SK-N-SH (cell line): ENCODE measurements at regions of chr11 and their contacts with region 1.

Region 1: GRCh38 chr11:92941676-92942571 is 27.5 kb upstream of the MTNR1B start:
- DNase-seq: peak; percentile 64
- H3K4me3 ChIP-seq: no peak overlapping the region; a peak in 1 of 4 replicates
- H3K27ac ChIP-seq: no peak overlapping the region
- H3K4me1 ChIP-seq: no peaks in the 10 kb centered on the region; a peak in 1 of 4 replicates
- H3K27me3 ChIP-seq: no peaks in the 10 kb centered on the region
- CTCF ChIP-seq: peak; percentile 81
- EP300 ChIP-seq: no peak
- RAD21 ChIP-seq: peak; percentile 94

Region 2: DNA sequence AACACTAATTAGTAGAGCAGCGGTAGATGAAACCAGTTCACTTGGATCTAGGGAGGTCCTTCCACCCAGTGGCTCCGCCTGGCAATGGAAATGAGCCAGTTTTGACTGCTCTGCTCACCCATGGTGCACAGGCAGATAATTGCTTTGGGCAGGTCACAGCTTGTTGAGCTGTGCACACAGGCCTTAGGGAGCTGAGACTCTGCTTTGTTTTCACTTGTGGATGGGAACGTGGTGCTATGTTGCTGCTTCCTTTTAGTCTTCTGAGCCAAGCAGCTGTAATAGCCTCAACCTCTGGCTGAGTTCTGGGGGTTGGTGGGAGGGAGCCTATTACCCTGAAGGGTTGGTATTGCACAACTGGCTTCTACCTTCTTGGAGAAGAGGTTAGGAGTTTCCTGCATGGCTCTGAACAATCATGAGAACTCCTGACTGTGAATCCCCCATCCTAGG is 234.7 kb before region 1 on chr11:
- CTCF ChIA-PET with region 1: no interaction called
- POLR2A ChIA-PET with region 1: no interaction called
- DNase-seq: no peak
- H3K4me3 ChIP-seq: no peak overlapping the region
- H3K27ac ChIP-seq: peak overlapping the region in 1 of 2 experiments; percentile 67; a peak in 3 of 4 replicates
- H3K4me1 ChIP-seq: peaks cover 3 to 40% of the 10 kb centered on the region in 2 experiments
- H3K27me3 ChIP-seq: no peaks in the 10 kb centered on the region
- CTCF ChIP-seq: no peak
- EP300 ChIP-seq: no peak
- RAD21 ChIP-seq: no peak

Region 3: GRCh38 chr11:92931746-92932422 is 10.0 kb before region 1 on chr11:
- CTCF ChIA-PET with region 1: interaction called, 21 read pairs
- POLR2A ChIA-PET with region 1: no interaction called
- DNase-seq: no peak
- H3K4me3 ChIP-seq: no peak overlapping the region
- H3K27ac ChIP-seq: no peak overlapping the region
- H3K4me1 ChIP-seq: no peaks in the 10 kb centered on the region; a peak in 1 of 4 replicates
- H3K27me3 ChIP-seq: no peaks in the 10 kb centered on the region
- CTCF ChIP-seq: no peak
- EP300 ChIP-seq: no peak
- RAD21 ChIP-seq: no peak

Region 4: GRCh38 chr11:92964471-92964870 is 22.5 kb after region 1 on chr11:
- CTCF ChIA-PET with region 1: interaction called, 25 read pairs
- POLR2A ChIA-PET with region 1: no interaction called
- DNase-seq: no peak
- H3K4me3 ChIP-seq: no peak overlapping the region
- H3K27ac ChIP-seq: no peak overlapping the region
- H3K4me1 ChIP-seq: peaks cover 0 to 4% of the 10 kb centered on the region in 2 experiments; a peak in 1 of 4 replicates
- H3K27me3 ChIP-seq: no peaks in the 10 kb centered on the region
- CTCF ChIP-seq: no peak
- EP300 ChIP-seq: no peak
- RAD21 ChIP-seq: no peak

Region 5: GRCh38 chr11:92975285-92975684 is 33.4 kb after region 1 on chr11:
- CTCF ChIA-PET with region 1: interaction called, 15 read pairs
- POLR2A ChIA-PET with region 1: no interaction called
- DNase-seq: no peak
- H3K4me3 ChIP-seq: no peak overlapping the region
- H3K27ac ChIP-seq: no peak overlapping the region
- H3K4me1 ChIP-seq: peaks cover 24 to 30% of the 10 kb centered on the region in 2 experiments; a peak in 3 of 4 replicates
- H3K27me3 ChIP-seq: no peaks in the 10 kb centered on the region
- CTCF ChIP-seq: no peak
- EP300 ChIP-seq: no peak
- RAD21 ChIP-seq: no peak

Region 6: DNA sequence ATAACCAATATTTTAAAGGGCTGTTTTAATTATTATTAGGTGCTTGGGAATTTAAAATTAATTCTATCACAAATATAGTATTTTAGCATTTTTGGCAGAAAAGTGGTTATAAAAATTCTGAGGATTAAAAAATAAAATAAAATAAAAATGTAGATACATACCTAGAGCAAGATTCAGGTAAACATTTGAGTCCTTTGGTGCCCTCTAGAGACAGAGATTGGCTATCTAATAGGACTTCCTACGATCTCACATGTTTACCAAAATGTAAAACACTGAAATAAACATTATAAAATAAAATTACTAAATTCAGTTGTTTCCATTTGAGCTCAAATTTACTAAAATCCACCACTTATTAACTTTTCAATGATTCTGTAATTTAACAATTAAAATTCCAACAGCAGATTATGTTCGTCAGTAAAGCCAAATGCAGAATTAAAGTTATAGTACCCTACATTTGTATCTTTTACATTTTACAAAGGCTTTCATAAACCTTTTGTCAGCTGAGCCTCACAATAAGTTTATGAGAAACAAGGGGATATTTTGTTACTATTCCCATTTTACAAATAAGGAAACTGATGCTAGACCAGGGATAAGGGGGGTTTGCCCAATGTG is 228.1 kb after region 1 on chr11:
- CTCF ChIA-PET with region 1: interaction called, 22 read pairs
- POLR2A ChIA-PET with region 1: no interaction called
- DNase-seq: peak; percentile 13
- H3K4me3 ChIP-seq: no peak overlapping the region
- H3K27ac ChIP-seq: no peak overlapping the region
- H3K4me1 ChIP-seq: no peaks in the 10 kb centered on the region; a peak in 1 of 4 replicates
- H3K27me3 ChIP-seq: no peaks in the 10 kb centered on the region
- CTCF ChIP-seq: peak; percentile 67
- EP300 ChIP-seq: no peak
- RAD21 ChIP-seq: peak; percentile 66

Region 7: GRCh38 chr11:93219440-93219839 is 277.5 kb after region 1 on chr11:
- CTCF ChIA-PET with region 1: interaction called, 74 read pairs
- POLR2A ChIA-PET with region 1: no interaction called
- DNase-seq: no peak
- H3K4me3 ChIP-seq: no peak overlapping the region
- H3K27ac ChIP-seq: no peak overlapping the region
- H3K4me1 ChIP-seq: peaks cover 0 to 10% of the 10 kb centered on the region in 2 experiments; a peak in 2 of 4 replicates
- H3K27me3 ChIP-seq: peaks cover 8% of the 10 kb centered on the region; the same call in 1 of the 2 replicates
- CTCF ChIP-seq: no peak
- EP300 ChIP-seq: no peak
- RAD21 ChIP-seq: no peak

Region 8: DNA sequence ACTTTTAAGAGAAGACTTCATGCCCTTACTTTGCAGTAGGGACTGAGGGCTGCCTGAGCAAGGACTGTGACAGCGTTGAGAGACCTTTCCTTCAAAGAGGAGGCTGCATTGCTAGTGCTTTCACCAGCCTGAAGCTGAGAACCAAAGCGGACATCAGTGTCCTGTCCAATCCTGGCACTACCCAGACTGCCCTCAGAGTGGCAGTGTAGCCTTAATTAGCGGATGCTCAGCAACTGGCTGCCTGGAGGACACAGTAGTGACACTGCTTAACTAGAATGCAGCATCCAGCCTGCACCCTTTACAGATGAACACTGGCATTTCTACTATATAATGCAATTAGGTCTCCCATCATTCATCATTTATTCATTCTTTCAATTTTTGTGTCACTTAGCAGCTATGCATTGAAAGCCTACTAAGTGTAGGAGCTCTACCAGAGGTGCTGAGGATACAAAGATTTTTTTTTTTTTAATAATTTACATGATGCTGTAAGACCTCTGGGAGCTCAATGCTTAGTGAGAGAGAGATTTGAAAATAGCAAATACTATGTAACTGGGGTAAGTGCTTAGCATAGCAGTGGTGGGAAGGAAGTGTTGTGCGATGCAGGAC is 292.8 kb after region 1 on chr11:
- CTCF ChIA-PET with region 1: interaction called, 34 read pairs
- POLR2A ChIA-PET with region 1: no interaction called
- DNase-seq: peak; percentile 78
- H3K4me3 ChIP-seq: peak overlapping the region in 1 of 2 experiments; percentile 44; a peak in 1 of 4 replicates
- H3K27ac ChIP-seq: no peak overlapping the region
- H3K4me1 ChIP-seq: no peaks in the 10 kb centered on the region; a peak in 2 of 4 replicates
- H3K27me3 ChIP-seq: peaks cover 13% of the 10 kb centered on the region
- CTCF ChIP-seq: peak; percentile 87
- EP300 ChIP-seq: no peak
- RAD21 ChIP-seq: peak; percentile 99